Heart left ventricle (tissue), 16 donors: ENCODE measurements at regions of chr21 and their contacts with region 1.

Region 1: DNA sequence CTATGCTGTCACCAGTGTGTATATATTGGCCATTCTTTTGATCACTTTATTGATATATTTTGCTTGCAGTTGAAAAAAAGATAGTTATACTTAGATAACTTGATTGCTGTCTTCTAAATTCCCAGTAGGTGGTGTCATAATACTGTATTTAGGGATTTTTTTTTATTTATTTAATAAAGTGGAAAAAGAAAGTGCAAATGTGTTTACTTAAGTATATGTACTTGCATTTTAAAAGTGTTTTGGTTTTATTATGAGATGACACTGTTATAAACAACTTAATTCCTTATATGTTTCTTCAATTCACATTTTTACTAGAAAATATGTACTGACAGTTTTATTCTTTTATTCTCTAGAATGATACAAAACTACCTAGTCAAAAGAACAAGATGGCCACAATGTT is 164.8 kb downstream of the USP25 start:
- DNase-seq: no peak
- ATAC-seq: no peak
- H3K4me3 ChIP-seq: no peak overlapping the region
- H3K27ac ChIP-seq: no peak overlapping the region
- H3K4me1 ChIP-seq: peaks cover 0 to 10% (median 6%) of the 10 kb centered on the region in 12 donors
- H3K27me3 ChIP-seq: no peaks in the 10 kb centered on the region
- CTCF ChIP-seq: peak in 10 of 12 donors; percentile 16 to 61 (median 44)
- POLR2A ChIP-seq: no peak

Region 2: GRCh38 chr21:15826147-15826780 is 68.3 kb before region 1 on chr21:
- intact Hi-C with region 1: loop called in 1 of 10 experiments (anchors 10 kb)
- DNase-seq: peak in 1 of 5 donors; percentile 11
- ATAC-seq: peak; percentile 46 to 76 (median 68)
- H3K4me3 ChIP-seq: peak overlapping the region in 1 of 12 donors; percentile 7
- H3K27ac ChIP-seq: peak overlapping the region; percentile 25 to 82 (median 63)
- H3K4me1 ChIP-seq: peaks cover 0 to 28% (median 8%) of the 10 kb centered on the region in 12 donors
- H3K27me3 ChIP-seq: no peaks in the 10 kb centered on the region
- CTCF ChIP-seq: peak; percentile 18 to 67 (median 53)
- POLR2A ChIP-seq: no peak

Region 3: DNA sequence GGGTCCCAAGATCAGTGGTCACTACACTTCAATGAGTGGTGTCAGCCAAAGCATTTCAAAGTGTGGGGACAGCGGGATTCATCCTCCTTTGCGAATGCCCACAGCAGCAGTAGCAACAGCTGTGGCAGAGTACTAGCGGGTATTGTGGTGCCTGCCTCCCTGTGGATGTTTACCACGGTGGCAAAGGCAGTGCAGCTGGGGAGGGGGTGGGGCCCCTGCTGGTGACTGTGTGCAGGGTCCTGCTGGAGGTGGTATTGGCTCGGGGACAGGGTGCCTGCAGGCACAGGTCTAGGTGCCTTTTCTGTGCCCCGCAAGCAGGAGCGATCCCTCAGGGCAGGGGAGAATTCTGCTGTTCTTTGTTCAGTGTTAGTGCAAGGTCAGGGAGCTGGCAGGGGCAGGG is 250.9 kb after region 1 on chr21:
- intact Hi-C with region 1: no loop called
- DNase-seq: no peak
- ATAC-seq: no peak
- H3K4me3 ChIP-seq: no peak overlapping the region
- H3K27ac ChIP-seq: no peak overlapping the region
- H3K4me1 ChIP-seq: no peaks in the 10 kb centered on the region
- H3K27me3 ChIP-seq: no peaks in the 10 kb centered on the region
- CTCF ChIP-seq: no peak
- POLR2A ChIP-seq: no peak

Region 4: DNA sequence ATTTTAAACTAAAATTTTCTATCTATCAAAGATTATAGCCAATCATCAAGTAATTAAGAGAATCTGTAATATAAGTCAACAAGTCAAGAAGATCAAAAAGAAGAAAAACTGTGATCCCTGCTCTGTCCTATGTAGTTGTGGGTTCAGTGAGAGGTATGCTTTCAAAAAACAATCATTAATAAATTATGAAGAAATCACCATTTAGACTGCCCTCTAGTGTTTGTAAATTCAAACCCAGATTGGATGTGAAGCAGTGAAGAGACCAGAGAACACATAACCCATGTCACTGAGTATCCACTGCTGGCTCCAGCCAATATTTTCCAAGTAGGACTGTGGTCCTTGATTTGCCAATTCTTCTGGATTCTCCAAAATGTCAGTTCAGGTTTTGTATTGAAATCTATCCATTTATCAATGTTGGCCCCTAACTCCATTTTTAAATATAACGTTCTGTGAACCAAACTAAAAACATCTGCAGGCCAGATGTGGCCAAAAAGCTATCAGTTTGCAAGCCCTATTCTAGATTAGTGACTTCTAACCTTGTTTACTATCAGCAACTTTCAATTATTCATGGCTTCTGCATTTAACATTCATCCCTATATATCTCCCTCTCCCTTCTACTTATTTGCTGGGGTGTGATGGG is 1150.7 kb after region 1 on chr21:
- intact Hi-C with region 1: loop called in 1 of 10 experiments (anchors 10 kb)
- DNase-seq: no peak
- ATAC-seq: peak in 2 of 4 donors; percentile 37 to 53
- H3K4me3 ChIP-seq: no peak overlapping the region
- H3K27ac ChIP-seq: no peak overlapping the region
- H3K4me1 ChIP-seq: no peaks in the 10 kb centered on the region
- H3K27me3 ChIP-seq: no peaks in the 10 kb centered on the region
- CTCF ChIP-seq: peak; percentile 29 to 61 (median 48)
- POLR2A ChIP-seq: no peak

Region 5: DNA sequence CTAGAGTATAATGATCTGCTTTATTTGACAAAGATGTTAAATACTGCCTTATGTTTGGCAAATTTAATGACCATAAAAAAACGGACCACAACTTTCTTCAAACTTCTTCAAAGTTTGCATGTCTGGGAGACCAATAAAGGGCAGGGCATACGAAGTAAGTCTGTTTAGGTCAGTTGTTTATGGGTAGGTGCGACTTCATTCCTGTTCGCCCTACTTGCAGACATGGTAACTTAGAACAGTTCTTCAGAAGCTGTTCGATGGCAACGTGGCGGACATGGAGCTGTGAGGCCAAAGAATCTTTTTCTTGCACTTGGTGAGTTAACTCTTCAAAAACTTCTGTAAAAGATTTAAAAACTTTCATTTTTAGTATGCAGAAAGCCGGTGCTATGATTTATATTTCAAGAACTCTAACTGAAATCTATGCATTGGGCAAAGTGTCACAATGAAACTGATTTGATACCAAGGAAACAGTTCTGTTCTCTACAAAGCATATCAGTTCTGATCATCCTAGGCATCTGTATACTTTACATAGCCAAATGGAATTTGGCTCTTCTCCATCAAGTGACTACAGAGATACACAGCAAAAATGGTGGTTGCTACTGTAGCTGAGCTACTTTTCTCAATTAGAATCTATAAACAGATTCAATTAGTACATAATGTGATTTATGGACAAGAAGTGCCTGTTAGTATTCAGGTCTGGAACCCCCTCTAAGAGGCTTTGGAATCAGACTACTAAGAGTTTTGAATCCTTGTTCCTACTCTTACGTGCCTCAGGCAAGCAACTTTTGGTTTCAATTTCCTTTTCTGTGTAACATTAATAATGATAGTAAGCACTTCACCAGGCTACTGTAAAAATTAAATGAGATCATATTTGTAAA is 1898.9 kb after region 1 on chr21:
- intact Hi-C with region 1: no loop called
- DNase-seq: no peak
- ATAC-seq: peak in 3 of 4 donors; percentile 39 to 59 (median 50)
- H3K4me3 ChIP-seq: peak overlapping the region in 10 of 12 donors; percentile 23 to 58 (median 40)
- H3K27ac ChIP-seq: peak overlapping the region in 11 of 12 donors; percentile 8 to 85 (median 31)
- H3K4me1 ChIP-seq: peaks cover 0 to 53% (median 11%) of the 10 kb centered on the region in 12 donors
- H3K27me3 ChIP-seq: no peaks in the 10 kb centered on the region
- CTCF ChIP-seq: no peak
- POLR2A ChIP-seq: no peak